PC-3 (cell line): ENCODE measurements at regions of chr3 and their contacts with region 1.

Region 1: GRCh38 chr3:9749645-9750555 is at the start of gene OGG1:
- DNase-seq: peak; percentile 98
- ATAC-seq: peak; percentile 91
- H3K4me3 ChIP-seq: peak within 1 kb of the TSS; percentile 83
- H3K27ac ChIP-seq: peak within 1 kb of the TSS; percentile 46
- H3K4me1 ChIP-seq: peaks cover 28% of the 10 kb centered on the region
- H3K27me3 ChIP-seq: no peaks in the 10 kb centered on the region
- CTCF ChIP-seq: no peak
- total RNA-seq, gene OGG1: 38.7 and 47.3 TPM in 2 replicates

Region 2: DNA sequence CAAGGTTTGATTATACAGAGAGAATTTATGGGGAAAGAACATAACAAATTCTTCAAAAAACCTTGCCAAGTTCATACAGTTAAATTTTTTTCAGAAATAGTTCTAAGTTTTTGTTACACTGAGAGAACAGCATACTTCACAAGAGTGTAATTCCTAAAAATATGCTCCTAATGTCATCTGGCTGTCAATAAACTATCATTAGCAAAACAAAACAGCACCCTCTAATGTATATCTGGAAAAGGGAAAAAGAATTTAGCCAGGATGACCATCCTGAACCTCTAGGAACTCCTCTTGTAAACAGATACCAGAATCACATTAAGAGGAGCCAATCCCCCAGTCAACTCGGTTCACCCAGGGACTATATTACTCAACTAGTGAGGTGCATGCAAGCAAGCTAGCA is 849.9 kb before region 1 on chr3:
- CTCF ChIA-PET with region 1: no interaction called
- POLR2A ChIA-PET with region 1: no interaction called
- intact Hi-C with region 1: no loop called
- DNase-seq: peak; percentile 14
- ATAC-seq: peak; percentile 37; the same call in 1 of the 2 replicates
- H3K4me3 ChIP-seq: no peak overlapping the region
- H3K27ac ChIP-seq: no peak overlapping the region
- H3K4me1 ChIP-seq: no peaks in the 10 kb centered on the region
- H3K27me3 ChIP-seq: no peaks in the 10 kb centered on the region
- CTCF ChIP-seq: peak; percentile 44; the same call in 1 of the 2 replicates

Region 3: GRCh38 chr3:9731206-9732079 is 18.5 kb before region 1 on chr3 and contains the start of gene BRPF1:
- CTCF ChIA-PET with region 1: no interaction called
- POLR2A ChIA-PET with region 1: no interaction called
- intact Hi-C with region 1: loop called (anchors 1 kb)
- DNase-seq: peak; percentile 98
- ATAC-seq: peak; percentile 96
- H3K4me3 ChIP-seq: peak within 1 kb of the TSS; percentile 89
- H3K27ac ChIP-seq: peak within 1 kb of the TSS; percentile 92
- H3K4me1 ChIP-seq: peaks cover 23% of the 10 kb centered on the region
- H3K27me3 ChIP-seq: no peaks in the 10 kb centered on the region
- CTCF ChIP-seq: no peak
- total RNA-seq, gene BRPF1: 27.0 and 29.8 TPM in 2 replicates

Region 4: DNA sequence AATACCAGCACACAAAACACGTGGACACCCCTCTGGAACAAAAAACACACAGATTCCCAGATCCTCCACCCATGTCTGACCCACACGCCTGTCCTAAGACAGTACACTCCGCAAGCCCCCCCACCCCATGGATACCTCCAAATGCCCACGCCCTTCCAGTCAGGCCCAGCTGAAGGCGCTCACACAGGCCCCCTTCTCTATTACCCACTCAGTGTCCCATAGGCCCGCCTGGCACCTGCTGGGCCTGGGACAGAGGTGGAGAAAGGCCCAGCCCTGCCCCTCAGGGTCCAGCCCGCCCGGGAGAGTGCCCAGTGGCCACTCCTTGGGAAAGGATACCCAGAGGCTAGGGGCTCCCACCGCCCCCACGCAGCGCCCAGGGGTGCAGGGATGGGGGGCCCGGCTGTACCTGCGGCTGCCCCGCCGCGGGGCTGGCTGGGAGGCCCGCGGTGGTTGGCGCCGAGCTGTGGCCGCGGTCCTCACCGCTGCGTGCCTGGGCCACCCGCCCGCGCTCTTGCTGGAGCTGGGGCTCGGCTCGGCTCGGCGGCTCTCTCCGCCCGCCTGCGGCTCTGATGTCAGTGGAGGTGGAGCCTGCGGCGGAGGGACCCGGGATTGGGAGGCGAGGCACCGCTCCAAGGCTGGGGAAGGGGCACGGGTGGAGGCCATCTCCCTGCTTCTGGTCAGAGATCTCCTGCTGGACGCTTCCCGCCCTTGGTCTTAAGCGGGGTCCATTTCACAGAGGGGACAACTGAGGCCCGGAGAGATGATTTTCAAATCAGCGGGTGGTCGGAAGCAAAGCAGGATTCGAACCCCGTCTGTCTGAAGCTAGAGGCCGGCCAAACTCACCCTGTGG is 19.8 kb after region 1 on chr3 and contains the start of gene CAMK1:
- CTCF ChIA-PET with region 1: no interaction called
- POLR2A ChIA-PET with region 1: interaction called, 3 read pairs
- intact Hi-C with region 1: loop called (anchors 2 kb)
- DNase-seq: peak; percentile 79
- ATAC-seq: peak; percentile 92
- H3K4me3 ChIP-seq: peak within 1 kb of the TSS; percentile 80
- H3K27ac ChIP-seq: no peak within 1 kb of the TSS
- H3K4me1 ChIP-seq: peaks cover 25% of the 10 kb centered on the region
- H3K27me3 ChIP-seq: no peaks in the 10 kb centered on the region
- CTCF ChIP-seq: no peak
- total RNA-seq, gene CAMK1: 36.6 and 53.2 TPM in 2 replicates

Region 5: GRCh38 chr3:9986237-9986725 is 236.4 kb after region 1 on chr3:
- CTCF ChIA-PET with region 1: no interaction called
- POLR2A ChIA-PET with region 1: no interaction called
- intact Hi-C with region 1: no loop called
- DNase-seq: no peak
- ATAC-seq: peak; percentile 25
- H3K4me3 ChIP-seq: peak overlapping the region; percentile 99
- H3K27ac ChIP-seq: peak overlapping the region; percentile 51
- H3K4me1 ChIP-seq: peaks cover 18% of the 10 kb centered on the region
- H3K27me3 ChIP-seq: no peaks in the 10 kb centered on the region
- CTCF ChIP-seq: no peak